GM10248 (cell line): ENCODE measurements at regions of chr22 and their contacts with region 1.

Region 1: GRCh38 chr22:43931771-43932170 is 8.2 kb downstream of the PNPLA3 start:
- DNase-seq: no peak
- CTCF ChIP-seq: no peak

Region 2: DNA sequence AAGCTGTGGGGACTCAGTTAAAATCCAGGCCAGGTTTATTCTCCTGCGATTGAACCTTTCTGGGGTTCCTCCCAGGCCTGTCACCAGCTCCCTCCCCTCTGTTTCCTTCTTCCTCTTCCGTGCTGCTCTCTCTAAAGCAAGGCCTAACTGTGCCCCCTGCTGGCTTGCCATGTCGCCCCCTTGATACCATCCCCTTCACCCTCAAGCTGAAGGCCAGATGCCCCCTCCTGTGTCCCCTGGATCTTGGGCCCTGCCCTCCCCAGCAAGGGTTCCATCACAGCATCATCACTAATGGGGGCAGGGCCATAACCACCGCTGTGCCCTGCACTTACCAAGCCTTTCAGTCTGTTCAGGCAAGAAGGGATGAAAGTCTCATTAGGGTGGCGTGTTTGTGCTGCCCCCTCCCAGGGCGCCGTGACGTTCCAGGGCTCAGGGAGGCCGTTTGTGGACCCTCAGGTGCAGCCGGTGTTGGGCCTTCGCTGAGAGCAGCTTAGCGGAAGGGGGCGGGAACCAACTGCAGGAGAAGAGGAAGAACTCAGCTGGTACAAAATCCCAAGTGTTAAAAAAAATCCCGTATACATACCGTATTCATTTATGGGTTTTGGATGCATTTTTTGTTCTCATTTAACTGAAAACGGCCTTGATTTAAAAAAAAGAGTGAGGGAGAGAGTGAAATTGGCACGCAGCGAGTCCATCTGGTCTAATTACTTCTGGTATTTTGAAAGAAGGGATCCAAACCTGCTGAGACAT is 450.0 kb before region 1 on chr22:
- CTCF ChIA-PET with region 1: no interaction called
- POLR2A ChIA-PET with region 1: no interaction called
- DNase-seq: no peak
- CTCF ChIP-seq: no peak

Region 3: GRCh38 chr22:43796567-43796966 is 135.2 kb before region 1 on chr22:
- CTCF ChIA-PET with region 1: no interaction called
- POLR2A ChIA-PET with region 1: no interaction called
- DNase-seq: no peak
- CTCF ChIP-seq: no peak

Region 4: DNA sequence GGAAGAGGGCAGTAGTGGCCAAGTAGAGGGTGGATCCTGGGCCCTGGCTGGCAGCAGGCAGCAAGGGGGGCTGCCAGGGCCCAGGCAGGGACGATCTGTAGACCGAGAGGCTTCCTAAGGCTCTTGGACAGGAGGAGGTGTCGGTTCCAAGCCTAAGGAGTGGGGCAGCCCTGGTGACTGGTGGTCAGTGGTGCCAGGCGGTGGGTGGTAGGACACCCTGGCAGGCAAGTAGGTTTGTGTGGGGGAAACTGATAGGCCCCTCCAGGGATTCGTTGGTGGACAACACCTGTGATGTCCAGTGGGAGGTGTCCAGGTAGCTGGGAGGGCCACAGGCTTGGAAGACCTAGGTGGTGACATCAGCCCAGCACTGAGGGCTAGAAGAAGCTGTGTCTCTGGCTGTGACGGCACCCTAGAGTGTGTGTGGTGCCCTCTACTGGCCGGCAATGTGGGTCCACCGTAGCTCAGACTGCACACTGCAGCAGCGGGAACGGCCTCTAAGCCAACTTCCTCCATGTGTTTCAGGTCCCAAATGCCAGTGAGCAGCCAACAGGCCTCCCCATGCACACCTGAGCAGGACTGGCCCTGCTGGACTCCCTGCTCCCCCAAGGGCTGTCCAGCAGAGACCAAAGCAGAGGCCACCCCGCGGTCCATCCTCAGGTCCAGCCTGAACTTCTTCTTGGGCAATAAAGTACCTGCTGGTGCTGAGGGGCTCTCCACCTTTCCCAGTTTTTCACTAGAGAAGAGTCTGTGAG is 14.0 kb after region 1 on chr22:
- CTCF ChIA-PET with region 1: interaction called, 26 read pairs
- POLR2A ChIA-PET with region 1: interaction called, 3 read pairs
- DNase-seq: peak; percentile 85
- CTCF ChIP-seq: peak; percentile 90